A549 (cell line): ENCODE measurements at regions of chr15 and their contacts with region 1.

Region 1: GRCh38 chr15:89496155-89497098 is at the start of gene RHCG:
- DNase-seq: peak; percentile 80 to 94
- ATAC-seq: peak; percentile 69 to 78
- H3K4me3 ChIP-seq: peak within 1 kb of the TSS; percentile 51
- H3K27ac ChIP-seq: peak within 1 kb of the TSS; percentile 80 to 88
- H3K4me1 ChIP-seq: peaks cover 44% of the 10 kb centered on the region
- CTCF ChIP-seq: peak; percentile 74
- EP300 ChIP-seq: peak; percentile 66 to 73; a peak in 2 of 5 replicates
- POLR2A ChIP-seq: peak; percentile 49
- RAD21 ChIP-seq: peak; percentile 68
- polyA plus RNA-seq, gene RHCG: 11.0 and 16.6 TPM in 2 replicates

Region 2: GRCh38 chr15:89419382-89419984 is 76.9 kb before region 1 on chr15:
- CTCF ChIA-PET with region 1: no interaction called
- POLR2A ChIA-PET with region 1: no interaction called
- DNase-seq: peak in 1 of 2 experiments; percentile 48
- ATAC-seq: peak; percentile 53 to 67; a peak in 5 of 6 replicates
- H3K4me3 ChIP-seq: no peak overlapping the region
- H3K27ac ChIP-seq: no peak overlapping the region
- H3K4me1 ChIP-seq: no peaks in the 10 kb centered on the region
- CTCF ChIP-seq: no peak
- EP300 ChIP-seq: no peak
- POLR2A ChIP-seq: no peak
- RAD21 ChIP-seq: no peak

Region 3: DNA sequence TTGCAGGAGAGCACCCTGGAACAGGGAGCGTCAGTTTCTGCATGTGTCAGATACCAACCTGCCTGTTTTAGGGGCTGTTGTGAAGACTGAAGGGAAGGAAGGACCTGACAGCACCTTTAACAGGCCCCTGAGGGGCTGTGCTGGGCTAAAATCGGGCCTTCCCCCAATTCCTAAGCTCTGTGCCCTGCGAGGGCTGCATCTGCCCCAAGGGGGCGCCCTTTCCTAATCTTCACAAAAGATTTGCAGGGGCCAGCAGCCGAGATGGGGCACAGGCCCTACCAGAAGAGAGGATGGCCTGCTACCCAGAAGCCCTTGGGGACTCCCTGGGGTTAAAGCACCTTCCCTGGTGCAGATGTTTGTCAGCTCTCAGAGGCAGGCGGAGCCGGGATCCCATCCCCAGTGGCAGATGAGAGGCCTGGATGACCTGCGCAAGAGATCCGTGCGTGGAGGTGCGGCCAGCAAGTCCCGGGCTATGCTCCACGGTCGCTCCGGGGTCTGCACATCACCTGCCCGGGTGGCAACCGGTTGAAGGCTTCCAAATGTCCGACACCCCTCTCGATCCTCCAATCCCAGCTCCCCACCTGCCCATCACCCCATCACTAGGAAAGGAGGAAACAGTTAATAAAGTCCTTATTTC is 53.6 kb before region 1 on chr15:
- CTCF ChIA-PET with region 1: interaction called, 15 read pairs
- POLR2A ChIA-PET with region 1: no interaction called
- DNase-seq: peak; percentile 68 to 88
- ATAC-seq: peak; percentile 73 to 93
- H3K4me3 ChIP-seq: no peak overlapping the region
- H3K27ac ChIP-seq: no peak overlapping the region
- H3K4me1 ChIP-seq: no peaks in the 10 kb centered on the region
- CTCF ChIP-seq: peak; percentile 84
- EP300 ChIP-seq: no peak
- POLR2A ChIP-seq: no peak
- RAD21 ChIP-seq: peak; percentile 77

Region 4: GRCh38 chr15:89514596-89515406 is 18.4 kb after region 1 on chr15:
- CTCF ChIA-PET with region 1: interaction called, 17 read pairs
- POLR2A ChIA-PET with region 1: interaction called, 3 read pairs
- DNase-seq: peak; percentile 31 to 84
- ATAC-seq: peak; percentile 84 to 85
- H3K4me3 ChIP-seq: no peak overlapping the region
- H3K27ac ChIP-seq: peak overlapping the region; percentile 44 to 65; a peak in 5 of 6 replicates
- H3K4me1 ChIP-seq: peaks cover 9% of the 10 kb centered on the region
- CTCF ChIP-seq: no peak
- EP300 ChIP-seq: no peak
- POLR2A ChIP-seq: no peak
- RAD21 ChIP-seq: no peak

Region 5: GRCh38 chr15:89551502-89551901 is 55.1 kb after region 1 on chr15:
- CTCF ChIA-PET with region 1: interaction called, 78 read pairs
- POLR2A ChIA-PET with region 1: no interaction called
- DNase-seq: no peak
- ATAC-seq: no peak
- H3K4me3 ChIP-seq: no peak overlapping the region
- H3K27ac ChIP-seq: peak overlapping the region in 1 of 2 experiments; percentile 32; a peak in 1 of 6 replicates
- H3K4me1 ChIP-seq: peaks cover 2% of the 10 kb centered on the region; the same call in 2 of the 3 replicates
- CTCF ChIP-seq: no peak
- EP300 ChIP-seq: no peak
- POLR2A ChIP-seq: no peak
- RAD21 ChIP-seq: no peak

Region 6: GRCh38 chr15:89566141-89566540 is 69.7 kb after region 1 on chr15:
- CTCF ChIA-PET with region 1: interaction called, 98 read pairs
- POLR2A ChIA-PET with region 1: no interaction called
- DNase-seq: peak in 1 of 2 experiments; percentile 27
- ATAC-seq: peak in 1 of 2 experiments; percentile 68; a peak in 4 of 6 replicates
- H3K4me3 ChIP-seq: no peak overlapping the region
- H3K27ac ChIP-seq: no peak overlapping the region
- H3K4me1 ChIP-seq: no peaks in the 10 kb centered on the region
- CTCF ChIP-seq: no peak
- EP300 ChIP-seq: no peak
- POLR2A ChIP-seq: no peak
- RAD21 ChIP-seq: no peak